Left lung (tissue), 14 donors: ENCODE measurements at regions of chr12 and their contacts with region 1.

Region 1: GRCh38 chr12:122052285-122052684 is 26.3 kb upstream of the MLXIP start:
- DNase-seq: no peak
- ATAC-seq: no peak
- H3K4me3 ChIP-seq: no peak overlapping the region
- H3K27ac ChIP-seq: no peak overlapping the region
- H3K4me1 ChIP-seq: peaks cover 0 to 17% of the 10 kb centered on the region in 2 donors
- H3K27me3 ChIP-seq: no peaks in the 10 kb centered on the region
- CTCF ChIP-seq: no peak

Region 2: GRCh38 chr12:122097927-122098756 is 45.9 kb after region 1 on chr12:
- intact Hi-C with region 1: no loop called
- DNase-seq: peak in 3 of 4 donors; percentile 78 to 92 (median 81)
- ATAC-seq: peak; percentile 95
- H3K4me3 ChIP-seq: no peak overlapping the region
- H3K27ac ChIP-seq: peak overlapping the region; percentile 67 to 78
- H3K4me1 ChIP-seq: peaks cover 37 to 66% of the 10 kb centered on the region in 2 donors
- H3K27me3 ChIP-seq: no peaks in the 10 kb centered on the region
- CTCF ChIP-seq: no peak

Region 3: DNA sequence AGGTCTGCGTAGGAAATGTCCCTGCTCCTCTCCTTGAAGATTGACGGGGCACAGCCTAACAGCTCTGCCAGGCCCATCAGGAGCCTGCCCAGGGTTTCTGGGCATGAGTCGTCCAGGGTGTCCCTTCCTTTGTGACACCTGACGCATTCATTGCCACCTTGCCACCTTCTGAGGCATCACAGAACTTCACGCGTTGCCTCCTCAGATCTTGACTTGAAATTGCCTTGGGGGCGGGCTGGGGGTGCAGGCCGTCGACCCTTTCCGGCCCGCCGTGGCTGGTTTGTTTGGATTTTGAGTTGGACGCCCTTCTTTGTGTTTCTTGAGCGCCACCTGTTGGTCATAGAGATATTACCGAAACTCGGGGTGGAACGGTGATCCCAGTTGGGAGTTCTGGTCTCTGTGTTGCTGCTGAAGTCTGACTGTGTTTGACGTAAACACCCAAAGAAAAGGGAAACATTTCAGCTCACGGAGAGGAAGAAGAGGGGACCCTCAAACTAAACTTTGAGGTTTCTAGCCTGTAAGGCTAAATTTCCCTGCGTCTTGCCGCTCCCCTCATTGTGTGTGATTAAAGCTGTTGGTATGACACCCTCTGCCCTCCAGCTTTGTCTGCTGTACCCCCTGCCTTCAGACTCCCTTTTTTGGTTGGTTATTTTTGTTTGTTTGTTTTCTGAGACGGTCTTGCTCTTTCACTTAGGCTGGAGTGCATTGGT is 70.9 kb after region 1 on chr12:
- intact Hi-C with region 1: loop called (anchors 2 to 5 kb)
- DNase-seq: peak; percentile 56 to 74 (median 69)
- ATAC-seq: peak; percentile 78
- H3K4me3 ChIP-seq: no peak overlapping the region
- H3K27ac ChIP-seq: no peak overlapping the region
- H3K4me1 ChIP-seq: peaks cover 0 to 37% of the 10 kb centered on the region in 2 donors
- H3K27me3 ChIP-seq: no peaks in the 10 kb centered on the region
- CTCF ChIP-seq: peak; percentile 62 to 68

Region 4: DNA sequence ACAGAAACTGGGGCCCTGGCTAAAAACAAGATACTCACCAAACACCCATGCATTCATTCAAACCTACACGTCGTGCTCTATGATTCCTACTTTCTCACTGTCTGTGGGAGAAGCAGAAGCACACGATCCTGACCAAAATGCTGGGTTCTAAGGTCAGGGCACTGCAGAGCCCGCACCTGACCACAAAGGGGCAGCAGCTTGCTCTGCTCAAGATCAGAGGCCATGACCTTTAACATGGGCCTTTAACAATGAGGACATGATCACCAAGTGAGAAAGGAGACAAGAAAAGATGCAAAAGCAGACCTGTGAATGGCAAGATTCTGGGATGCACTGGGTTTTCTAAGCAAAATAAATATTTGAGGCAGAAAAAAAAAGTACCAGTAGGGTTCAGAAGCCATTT is 254.1 kb after region 1 on chr12:
- intact Hi-C with region 1: no loop called
- DNase-seq: no peak
- ATAC-seq: no peak
- H3K4me3 ChIP-seq: no peak overlapping the region
- H3K27ac ChIP-seq: no peak overlapping the region
- H3K4me1 ChIP-seq: no peaks in the 10 kb centered on the region
- H3K27me3 ChIP-seq: no peaks in the 10 kb centered on the region
- CTCF ChIP-seq: no peak